ENCODE measurements at regions of chr5 and their contacts with region 1.

Region 1: GRCh38 chr5:136080483-136081216 is 51.9 kb downstream of the TGFBI start:
- DNase-seq: peak; percentile 86 to 92 (median 89)
- ATAC-seq: peak; percentile 93 to 96 (median 94)
- H3K4me3 ChIP-seq: peak overlapping the region in 11 of 12 donors; percentile 11 to 63 (median 44)
- H3K27ac ChIP-seq: peak overlapping the region; percentile 38 to 87 (median 74)
- H3K4me1 ChIP-seq: peaks cover 0 to 35% (median 12%) of the 10 kb centered on the region in 12 donors
- H3K27me3 ChIP-seq: peaks cover 0 to 8% (median 0%) of the 10 kb centered on the region in 9 donors
- CTCF ChIP-seq: no peak
- POLR2A ChIP-seq: peak in 1 of 2 donors; percentile 44

Region 2: GRCh38 chr5:135944967-135945560 is 135.6 kb before region 1 on chr5:
- intact Hi-C with region 1: loop called in 7 of 10 experiments (anchors 1 to 5 kb)
- DNase-seq: peak in 4 of 5 donors; percentile 28 to 56 (median 41)
- ATAC-seq: peak in 3 of 4 donors; percentile 46 to 59 (median 58)
- H3K4me3 ChIP-seq: no peak overlapping the region
- H3K27ac ChIP-seq: no peak overlapping the region
- H3K4me1 ChIP-seq: no peaks in the 10 kb centered on the region
- H3K27me3 ChIP-seq: peaks cover 0 to 11% (median 0%) of the 10 kb centered on the region in 9 donors
- CTCF ChIP-seq: peak; percentile 61 to 87 (median 80)
- POLR2A ChIP-seq: no peak

Region 3: DNA sequence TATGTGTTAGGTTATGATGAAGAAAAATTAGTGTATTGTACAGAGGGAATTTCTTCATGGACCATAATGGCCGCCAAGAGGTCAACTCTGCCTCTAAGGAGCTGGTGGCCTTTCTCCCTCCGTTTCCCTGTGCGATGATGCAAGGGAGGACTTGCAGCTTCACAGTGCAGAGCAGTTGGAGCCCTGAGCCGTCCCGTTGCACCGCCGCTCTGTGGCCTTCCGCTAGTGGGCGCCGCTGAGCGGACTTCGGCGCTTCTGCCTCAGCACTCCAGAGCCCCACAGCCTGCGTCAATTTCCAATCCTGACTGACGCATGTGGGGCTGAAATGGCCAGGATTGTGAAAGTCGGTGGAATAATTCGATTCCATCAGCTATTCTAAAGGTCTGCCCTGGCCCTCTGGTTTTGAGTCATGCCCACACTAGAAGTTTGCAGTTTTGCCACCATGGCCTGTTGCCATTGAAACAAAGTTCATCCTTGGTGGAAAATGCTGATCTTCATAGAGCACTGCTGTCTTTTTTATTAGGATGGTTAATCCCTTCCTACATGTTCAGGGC is 103.2 kb before region 1 on chr5:
- intact Hi-C with region 1: loop called in 1 of 10 experiments (anchors 5 kb)
- DNase-seq: peak; percentile 54 to 88 (median 71)
- ATAC-seq: peak; percentile 60 to 94 (median 79)
- H3K4me3 ChIP-seq: no peak overlapping the region
- H3K27ac ChIP-seq: peak overlapping the region in 1 of 12 donors; percentile 5
- H3K4me1 ChIP-seq: peaks cover 0 to 44% (median 22%) of the 10 kb centered on the region in 12 donors
- H3K27me3 ChIP-seq: no peaks in the 10 kb centered on the region
- CTCF ChIP-seq: peak; percentile 36 to 66 (median 52)
- POLR2A ChIP-seq: no peak

Region 4: DNA sequence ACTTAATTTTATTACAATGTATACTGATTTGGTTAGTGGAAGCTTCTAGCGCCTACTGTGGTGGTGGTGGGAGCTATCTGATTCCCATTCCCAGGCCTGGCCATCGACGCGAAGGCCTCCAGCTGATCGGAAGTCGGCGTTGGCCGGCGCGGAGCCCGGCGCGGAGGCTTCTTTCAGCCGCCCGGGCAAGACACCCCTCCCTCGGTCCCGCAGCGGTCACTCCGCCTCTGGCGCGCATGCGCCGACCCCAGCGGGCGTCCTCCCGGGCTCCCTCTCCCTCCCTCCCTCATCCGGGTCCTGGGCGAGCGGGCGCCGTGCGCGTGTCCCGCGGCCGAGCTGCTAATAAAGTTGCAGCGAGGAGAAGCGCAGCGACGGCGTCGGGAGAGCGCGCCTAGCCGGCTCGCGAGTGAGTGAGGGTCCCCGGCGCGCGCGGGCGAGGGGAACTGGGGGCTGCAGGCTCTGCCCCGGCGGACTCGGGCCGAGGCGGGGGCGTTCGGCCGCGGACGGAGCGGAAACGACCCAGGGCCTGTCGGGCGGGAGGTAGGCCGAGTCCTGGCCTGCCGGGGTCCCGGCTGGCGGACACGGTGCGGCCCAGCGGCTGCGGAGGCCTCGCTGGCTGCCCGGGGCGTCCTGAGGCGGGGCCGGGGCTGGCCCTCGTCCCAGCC is 52.0 kb after region 1 on chr5 and contains the start of gene SMAD5:
- intact Hi-C with region 1: loop called in 7 of 10 experiments (anchors 5 kb)
- DNase-seq: peak; percentile 97 to 99 (median 98)
- ATAC-seq: peak; percentile 97 to 99 (median 99)
- H3K4me3 ChIP-seq: peak within 1 kb of the TSS; percentile 80 to 95 (median 90)
- H3K27ac ChIP-seq: peak within 1 kb of the TSS; percentile 84 to 100 (median 98)
- H3K4me1 ChIP-seq: peaks cover 7 to 65% (median 39%) of the 10 kb centered on the region in 12 donors
- H3K27me3 ChIP-seq: no peaks in the 10 kb centered on the region
- CTCF ChIP-seq: peak in 1 of 12 donors; percentile 13
- POLR2A ChIP-seq: peak; percentile 36 to 86
- total RNA-seq, gene SMAD5: 24.9 to 53.3 (median 36.4) TPM

Region 5: GRCh38 chr5:136212252-136212721 is 131.6 kb after region 1 on chr5:
- intact Hi-C with region 1: loop called in 1 of 10 experiments (anchors 5 kb)
- DNase-seq: peak; percentile 41 to 76 (median 60)
- ATAC-seq: peak in 2 of 4 donors; percentile 56 to 77
- H3K4me3 ChIP-seq: no peak overlapping the region
- H3K27ac ChIP-seq: no peak overlapping the region
- H3K4me1 ChIP-seq: no peaks in the 10 kb centered on the region
- H3K27me3 ChIP-seq: peaks cover 0 to 40% (median 9%) of the 10 kb centered on the region in 9 donors
- CTCF ChIP-seq: peak; percentile 73 to 96 (median 84)
- POLR2A ChIP-seq: no peak

Measured in heart left ventricle (tissue), 16 donors.